Prostate gland (tissue), 2 donors: ENCODE measurements at regions of chr22 and their contacts with region 1.

Region 1: GRCh38 chr22:40818747-40819598 is at the start of gene SLC25A17:
- DNase-seq: peak; percentile 90
- H3K4me3 ChIP-seq: peak within 1 kb of the TSS; percentile 84 to 85
- H3K27ac ChIP-seq: peak within 1 kb of the TSS; percentile 78
- H3K4me1 ChIP-seq: peaks cover 2% of the 10 kb centered on the region
- H3K27me3 ChIP-seq: no peaks in the 10 kb centered on the region
- CTCF ChIP-seq: peak in 3 of 4 experiments; percentile 28 to 59 (median 45)
- POLR2A ChIP-seq: peak; percentile 38
- total RNA-seq, gene SLC25A17: 27.8 to 28.0 TPM

Region 2: DNA sequence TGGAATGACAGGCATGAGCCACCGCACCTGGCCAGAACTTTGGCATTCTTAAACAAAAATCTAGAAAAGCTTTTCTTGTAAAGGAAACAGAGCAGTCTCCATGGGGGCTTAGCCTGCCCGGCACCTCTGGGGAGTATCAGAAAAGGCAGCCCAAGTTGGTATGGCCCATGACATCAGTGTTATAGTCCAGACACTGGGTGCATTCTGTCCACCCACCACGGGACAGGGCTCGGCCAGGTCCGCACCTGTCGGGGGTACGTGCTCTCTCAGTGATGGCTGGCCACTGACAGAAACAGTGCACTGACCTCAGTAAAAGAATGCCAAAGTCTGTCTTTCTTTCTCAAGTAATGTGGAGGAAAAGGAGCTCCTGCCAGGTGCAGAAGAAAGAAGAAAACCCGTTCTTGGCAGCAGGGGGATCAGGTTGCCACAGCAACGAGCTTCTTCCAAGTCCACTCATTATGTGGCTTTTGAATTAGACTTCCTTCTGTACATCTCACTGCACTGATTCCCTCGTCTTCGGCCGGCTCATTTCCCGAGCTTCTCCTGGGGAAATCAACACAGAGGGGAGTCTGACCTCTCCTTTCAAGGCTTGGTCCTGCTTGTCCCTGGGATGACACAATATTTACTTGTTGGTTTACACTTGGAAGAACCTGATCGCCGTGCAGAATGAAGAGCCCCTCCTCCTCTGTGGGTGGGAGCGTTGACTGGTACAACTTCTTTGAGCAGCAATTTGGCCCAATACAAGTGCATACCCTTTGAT is 104.6 kb before region 1 on chr22:
- intact Hi-C with region 1: no loop called
- DNase-seq: no peak
- H3K4me3 ChIP-seq: no peak overlapping the region
- H3K27ac ChIP-seq: no peak overlapping the region
- H3K4me1 ChIP-seq: no peaks in the 10 kb centered on the region
- H3K27me3 ChIP-seq: no peaks in the 10 kb centered on the region
- CTCF ChIP-seq: no peak
- POLR2A ChIP-seq: no peak

Region 3: GRCh38 chr22:40856513-40857308 is 37.7 kb after region 1 on chr22 and contains the starts of genes ST13 and XPNPEP3:
- intact Hi-C with region 1: loop called (anchors 5 kb)
- DNase-seq: peak; percentile 97
- H3K4me3 ChIP-seq: peak within 1 kb of the TSS; percentile 82 to 89
- H3K27ac ChIP-seq: peak within 1 kb of the TSS; percentile 99
- H3K4me1 ChIP-seq: peaks cover 9% of the 10 kb centered on the region
- H3K27me3 ChIP-seq: no peaks in the 10 kb centered on the region
- CTCF ChIP-seq: peak in 3 of 4 experiments; percentile 3 to 26 (median 20)
- POLR2A ChIP-seq: peak; percentile 91
- total RNA-seq, gene ST13: 159 to 205 TPM
- total RNA-seq, gene XPNPEP3: 10.5 to 19.2 TPM

Region 4: DNA sequence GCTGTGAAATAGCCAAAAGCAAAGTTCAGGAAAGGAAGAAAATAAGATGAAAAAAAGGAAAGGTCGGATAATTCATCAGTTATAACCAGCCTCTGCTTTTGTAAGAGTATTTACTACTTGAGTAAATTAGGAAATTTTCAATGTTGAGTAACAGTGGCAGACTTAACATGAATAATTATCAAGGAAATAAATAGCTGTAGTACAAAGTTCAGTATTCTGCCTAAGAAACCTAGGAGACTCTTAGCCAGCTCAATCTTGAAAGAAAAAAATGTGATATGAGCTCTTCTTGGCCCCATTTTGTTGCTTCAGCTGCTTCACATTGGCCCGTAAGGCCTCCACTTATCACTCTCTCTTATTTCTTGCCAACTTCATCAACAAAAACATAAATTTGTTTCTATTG is 59.9 kb after region 1 on chr22:
- intact Hi-C with region 1: no loop called
- DNase-seq: no peak
- H3K4me3 ChIP-seq: no peak overlapping the region
- H3K27ac ChIP-seq: no peak overlapping the region
- H3K4me1 ChIP-seq: no peaks in the 10 kb centered on the region
- H3K27me3 ChIP-seq: no peaks in the 10 kb centered on the region
- CTCF ChIP-seq: no peak
- POLR2A ChIP-seq: no peak

Region 5: DNA sequence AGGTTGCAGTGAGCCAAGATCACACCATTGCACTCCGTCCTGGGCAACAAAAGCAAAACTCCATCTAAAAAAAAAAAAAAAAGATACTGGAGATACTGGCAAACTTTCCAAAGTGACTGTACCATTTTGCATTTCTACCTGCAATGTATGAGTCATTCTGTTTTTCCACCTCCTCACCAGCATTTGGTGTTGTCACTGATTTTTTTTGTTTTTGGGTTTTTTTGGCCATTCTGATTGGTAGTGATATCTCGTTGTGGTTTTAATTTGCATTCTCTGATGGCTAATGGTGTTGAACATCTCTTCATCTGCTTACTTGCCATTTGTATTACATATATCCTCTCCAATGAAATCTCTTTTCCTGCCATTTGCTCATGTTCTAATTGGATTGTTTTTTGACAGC is 120.2 kb after region 1 on chr22:
- intact Hi-C with region 1: no loop called
- DNase-seq: no peak
- H3K4me3 ChIP-seq: no peak overlapping the region
- H3K27ac ChIP-seq: no peak overlapping the region
- H3K4me1 ChIP-seq: no peaks in the 10 kb centered on the region
- H3K27me3 ChIP-seq: no peaks in the 10 kb centered on the region
- CTCF ChIP-seq: no peak
- POLR2A ChIP-seq: no peak